ENCODE measurements at regions of chr7 and their contacts with region 1.

Region 1: GRCh38 chr7:106717955-106718871 is 57.3 kb upstream of the CCDC71L start:
- DNase-seq: peak; percentile 92
- H3K4me3 Mint-ChIP-seq: no peak overlapping the region
- H3K27ac Mint-ChIP-seq: no peak overlapping the region
- H3K4me1 Mint-ChIP-seq: peaks cover 10% of the 10 kb centered on the region
- H3K27me3 Mint-ChIP-seq: no peaks in the 10 kb centered on the region

Region 2: DNA sequence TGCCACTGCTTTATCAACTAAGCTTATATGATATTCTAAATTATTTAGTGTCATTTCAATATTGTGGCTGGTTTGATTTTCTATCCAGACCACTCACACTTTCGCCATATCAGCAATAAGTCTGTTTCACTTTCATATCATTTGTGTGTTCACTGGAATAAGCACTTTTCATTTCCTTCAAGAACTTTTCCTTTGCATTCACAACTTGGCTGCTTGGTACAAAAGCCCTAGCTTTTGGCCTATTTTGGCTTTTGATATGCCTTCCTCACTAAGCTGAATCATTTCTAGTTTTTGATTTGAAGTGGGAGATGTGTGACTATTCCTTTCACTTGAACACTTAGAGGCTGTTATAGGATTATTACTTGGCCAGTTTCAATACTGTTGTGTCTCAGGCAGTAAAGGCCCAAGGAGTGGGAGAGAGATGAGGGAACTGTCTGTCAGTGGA is 312.5 kb before region 1 on chr7:
- CTCF ChIA-PET with region 1: no interaction called
- intact Hi-C with region 1: loop called (anchors 1 kb)
- DNase-seq: peak; percentile 53
- H3K4me3 Mint-ChIP-seq: no peak overlapping the region
- H3K27ac Mint-ChIP-seq: peak overlapping the region; percentile 50
- H3K4me1 Mint-ChIP-seq: peaks cover 32% of the 10 kb centered on the region
- H3K27me3 Mint-ChIP-seq: peaks cover 44% of the 10 kb centered on the region

Region 3: GRCh38 chr7:106704000-106704840 is 14.0 kb before region 1 on chr7:
- CTCF ChIA-PET with region 1: interaction called, 4 read pairs
- intact Hi-C with region 1: loop called (anchors 1 kb)
- DNase-seq: peak; percentile 53
- H3K4me3 Mint-ChIP-seq: peak overlapping the region; percentile 3
- H3K27ac Mint-ChIP-seq: peak overlapping the region; percentile 50
- H3K4me1 Mint-ChIP-seq: peaks cover 24% of the 10 kb centered on the region
- H3K27me3 Mint-ChIP-seq: no peaks in the 10 kb centered on the region

Region 4: GRCh38 chr7:106731187-106731586 is 13.0 kb after region 1 on chr7:
- CTCF ChIA-PET with region 1: interaction called, 42 read pairs
- intact Hi-C with region 1: loop called (anchors 1 kb)
- DNase-seq: no peak
- H3K4me3 Mint-ChIP-seq: peak overlapping the region; percentile 7
- H3K27ac Mint-ChIP-seq: peak overlapping the region; percentile 31
- H3K4me1 Mint-ChIP-seq: peaks cover 36% of the 10 kb centered on the region
- H3K27me3 Mint-ChIP-seq: no peaks in the 10 kb centered on the region

Region 5: DNA sequence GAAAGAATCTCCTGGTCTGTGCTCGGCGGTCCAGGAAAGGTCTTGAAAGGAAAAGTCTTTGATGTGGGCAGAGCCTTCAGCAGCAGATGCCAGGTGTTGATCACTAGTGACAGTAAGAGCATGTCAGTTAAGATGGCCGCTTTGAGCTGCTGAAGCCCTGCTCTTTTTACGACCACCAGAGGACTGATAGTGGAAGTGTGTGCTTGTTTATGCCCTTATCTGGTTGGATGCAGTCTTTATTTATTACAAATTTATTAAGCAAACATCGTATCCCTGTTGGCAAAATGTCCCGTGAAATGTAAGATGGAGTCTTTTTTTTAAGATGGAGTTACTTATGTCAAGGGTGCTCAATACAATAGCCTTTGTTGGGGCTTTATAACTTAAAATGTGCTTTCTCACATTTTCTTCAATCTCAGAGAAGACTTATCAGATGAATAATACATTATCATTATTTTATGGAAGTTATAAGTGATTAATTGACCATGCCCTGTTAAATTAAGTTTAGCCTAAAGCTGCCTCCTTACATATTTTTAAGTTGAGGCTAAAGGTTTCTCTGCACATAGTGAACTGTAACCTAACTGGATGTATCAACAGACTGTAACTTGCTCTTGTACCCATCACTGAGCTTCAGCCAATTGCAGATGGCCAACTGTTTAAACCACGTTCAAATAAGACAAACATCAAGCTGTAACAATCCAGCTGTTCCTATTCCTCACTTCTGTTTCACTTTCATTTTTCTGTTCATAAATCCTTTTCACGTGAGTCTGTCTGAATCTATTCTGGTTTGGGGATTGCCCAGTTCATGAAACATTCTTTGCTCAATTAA is 49.5 kb after region 1 on chr7:
- CTCF ChIA-PET with region 1: interaction called, 3 read pairs
- intact Hi-C with region 1: loop called (anchors 1 kb)
- DNase-seq: peak; percentile 25
- H3K4me3 Mint-ChIP-seq: peak overlapping the region; percentile 20
- H3K27ac Mint-ChIP-seq: peak overlapping the region; percentile 13
- H3K4me1 Mint-ChIP-seq: peaks cover 43% of the 10 kb centered on the region
- H3K27me3 Mint-ChIP-seq: no peaks in the 10 kb centered on the region